ENCODE measurements at regions of chr10 and their contacts with region 1.

Region 1: DNA sequence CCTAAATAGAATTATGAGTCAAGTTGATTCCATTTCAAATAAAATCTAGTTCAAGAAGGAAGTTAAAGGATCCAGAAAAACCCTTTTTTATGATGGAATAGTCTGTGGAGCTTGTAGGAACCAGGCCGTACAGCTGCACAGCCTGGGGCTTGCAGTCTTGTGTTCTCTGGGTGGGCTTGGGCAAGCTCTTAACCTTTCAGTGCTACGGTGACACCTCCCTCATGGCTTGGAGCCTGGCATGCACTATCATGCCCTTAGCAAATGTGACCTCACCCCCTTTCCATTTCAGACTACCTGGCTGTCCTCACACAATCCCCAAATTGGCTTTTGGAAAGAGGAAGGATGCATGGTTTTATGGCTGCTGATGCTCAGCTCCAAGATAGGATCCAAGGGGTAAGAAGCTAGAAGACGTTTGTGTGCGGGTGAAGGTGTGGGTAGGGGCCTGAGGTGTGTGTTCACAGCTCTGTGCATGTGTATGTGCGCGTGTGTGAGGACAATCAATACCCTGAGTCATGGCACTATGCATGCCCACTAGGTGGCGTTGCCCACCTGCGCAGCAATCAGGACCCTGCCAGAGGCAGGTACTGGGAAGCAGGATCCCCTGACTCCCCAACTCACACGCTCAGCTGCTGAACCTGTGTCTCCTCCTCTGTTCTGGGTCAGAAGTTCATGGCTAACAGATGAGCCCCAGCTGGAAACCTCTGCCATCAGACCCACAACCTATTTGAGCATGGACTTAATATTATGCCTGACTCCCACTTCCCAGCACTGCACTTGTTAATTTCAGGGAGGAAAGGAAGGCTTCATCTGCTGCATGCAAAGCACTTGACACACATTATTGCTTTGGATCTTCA is 113.4 kb downstream of the PTPN20 start:
- DNase-seq: peak; percentile 80

Region 2: DNA sequence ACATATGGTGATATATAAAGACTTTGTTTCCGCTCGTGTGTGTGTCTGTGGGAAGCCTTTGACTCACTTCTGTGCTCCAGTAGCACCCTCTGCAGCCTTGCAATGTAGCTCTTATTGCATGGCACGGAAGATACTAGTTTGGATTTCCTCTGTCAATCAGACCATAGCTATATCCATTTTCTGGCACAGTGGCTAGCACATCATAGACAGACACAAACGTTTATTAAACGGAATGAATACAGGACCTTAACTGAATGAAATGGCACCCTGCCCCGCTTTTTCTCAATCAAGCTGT is 237.4 kb before region 1 on chr10:
- intact Hi-C with region 1: no loop called
- DNase-seq: no peak

Region 3: DNA sequence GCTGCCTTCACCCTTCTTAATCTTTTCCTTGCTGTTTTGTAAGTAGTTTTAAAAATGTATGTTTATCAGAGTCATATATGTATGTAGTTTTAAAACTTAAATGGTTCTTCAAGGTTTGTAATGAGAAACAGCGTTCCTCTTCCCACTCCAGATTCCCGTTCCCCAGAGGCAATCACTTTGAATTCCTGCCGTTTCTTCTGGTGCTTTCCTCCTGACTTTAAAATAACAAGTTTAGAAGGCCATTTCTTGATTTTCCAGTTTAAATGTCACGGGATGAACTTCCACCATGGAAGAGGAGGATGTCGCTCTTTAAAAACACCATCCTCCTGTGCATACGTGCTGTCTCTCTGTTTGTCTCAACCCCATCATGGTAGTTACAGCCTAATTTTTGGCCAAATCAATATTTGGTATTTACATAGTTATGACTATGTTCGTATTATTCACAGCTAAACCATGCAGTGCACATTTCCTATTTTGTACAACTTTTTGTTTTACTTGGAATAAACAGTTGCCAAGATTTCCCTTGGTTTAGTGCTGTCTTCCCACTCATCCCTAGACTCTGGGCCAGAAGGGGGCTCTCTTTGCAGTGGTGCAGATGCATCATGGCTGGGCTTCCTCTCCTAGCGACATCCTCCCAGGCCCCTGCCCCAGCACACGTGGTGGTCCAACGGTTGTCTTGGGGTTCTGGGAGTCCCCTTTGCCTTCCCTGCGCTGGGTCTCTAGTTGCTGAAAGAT is 38.0 kb after region 1 on chr10:
- intact Hi-C with region 1: no loop called
- DNase-seq: no peak

Region 4: DNA sequence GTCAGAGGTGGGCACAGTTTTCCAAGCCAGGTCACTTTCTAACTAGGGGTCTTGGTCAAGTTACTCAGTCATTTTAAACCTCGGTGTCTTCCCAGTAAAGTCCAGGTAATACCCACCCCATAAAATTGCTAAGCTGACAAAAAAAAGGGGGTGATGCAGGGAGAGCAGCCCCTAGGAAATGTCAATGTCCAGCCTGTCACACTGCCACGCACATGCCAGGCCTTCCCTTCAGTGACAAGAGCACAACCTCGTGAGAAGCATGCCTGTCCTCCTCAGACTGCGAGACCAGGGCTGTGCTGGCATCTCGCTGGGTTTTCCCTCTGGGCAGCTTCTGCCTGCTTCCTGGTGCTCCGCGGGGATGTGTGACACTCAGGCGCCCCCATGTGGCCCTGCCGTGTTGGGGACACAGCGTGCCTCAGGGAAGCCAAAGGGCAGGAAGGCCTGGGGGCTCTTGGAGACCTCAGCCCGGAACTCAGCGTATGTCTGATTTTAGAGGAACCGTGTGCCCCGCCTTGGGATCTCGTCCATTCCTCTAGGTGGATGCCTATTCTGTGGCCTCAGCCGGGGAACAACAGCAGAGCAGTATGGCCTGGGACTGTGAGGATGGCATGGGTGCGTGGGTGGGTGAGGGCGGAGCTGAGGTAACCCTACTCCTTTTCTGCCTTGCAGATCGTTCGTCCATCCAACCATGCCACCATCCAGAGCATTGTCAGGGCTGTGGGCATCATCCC is 287.5 kb after region 1 on chr10:
- intact Hi-C with region 1: loop called in 1 of 2 experiments (anchors 5 kb)
- DNase-seq: peak; percentile 94

Measured in posterior vena cava (tissue), 2 donors.